Pancreas (tissue), 10 donors: ENCODE measurements at regions of chr14 and their contacts with region 1.

Region 1: GRCh38 chr14:62126879-62127478 is 364.8 kb downstream of the SNAPC1 start:
- DNase-seq: peak in 2 of 6 donors; percentile 11 to 12
- ATAC-seq: peak; percentile 63 to 94 (median 94)
- H3K4me3 ChIP-seq: no peak overlapping the region
- H3K27ac ChIP-seq: no peak overlapping the region
- H3K4me1 ChIP-seq: no peaks in the 10 kb centered on the region
- H3K27me3 ChIP-seq: peaks cover 0 to 10% (median 0%) of the 10 kb centered on the region in 4 donors
- CTCF ChIP-seq: peak; percentile 51 to 73 (median 64)

Region 2: GRCh38 chr14:61894452-61895077 is 232.4 kb before region 1 on chr14:
- intact Hi-C with region 1: loop called in 2 of 3 experiments (anchors 10 kb)
- DNase-seq: peak in 5 of 6 donors; percentile 40 to 82 (median 62)
- ATAC-seq: peak; percentile 53 to 89 (median 86)
- H3K4me3 ChIP-seq: no peak overlapping the region
- H3K27ac ChIP-seq: no peak overlapping the region
- H3K4me1 ChIP-seq: no peaks in the 10 kb centered on the region
- H3K27me3 ChIP-seq: no peaks in the 10 kb centered on the region
- CTCF ChIP-seq: peak; percentile 27 to 67 (median 54)

Region 3: GRCh38 chr14:61925043-61925442 is 201.9 kb before region 1 on chr14:
- intact Hi-C with region 1: loop called in 1 of 3 experiments (anchors 10 kb)
- DNase-seq: no peak
- ATAC-seq: peak in 3 of 4 donors; percentile 42 to 65 (median 49)
- H3K4me3 ChIP-seq: no peak overlapping the region
- H3K27ac ChIP-seq: no peak overlapping the region
- H3K4me1 ChIP-seq: peaks cover 0 to 7% (median 0%) of the 10 kb centered on the region in 3 donors
- H3K27me3 ChIP-seq: no peaks in the 10 kb centered on the region
- CTCF ChIP-seq: no peak